ENCODE measurements at regions of chr9 and their contacts with region 1.

Region 1: GRCh38 chr9:22452415-22453010 is 5.9 kb downstream of the DMRTA1 start:
- DNase-seq: peak in 7 of 10 donors; percentile 33 to 81 (median 45)

Region 2: GRCh38 chr9:22244141-22245011 is 208.1 kb before region 1 on chr9:
- intact Hi-C with region 1: loop called (anchors 2 kb)
- DNase-seq: no peak

Region 3: GRCh38 chr9:22307013-22307711 is 145.4 kb before region 1 on chr9:
- intact Hi-C with region 1: loop called (anchors 5 kb)
- DNase-seq: peak in 1 of 10 donors; percentile 8

Region 4: DNA sequence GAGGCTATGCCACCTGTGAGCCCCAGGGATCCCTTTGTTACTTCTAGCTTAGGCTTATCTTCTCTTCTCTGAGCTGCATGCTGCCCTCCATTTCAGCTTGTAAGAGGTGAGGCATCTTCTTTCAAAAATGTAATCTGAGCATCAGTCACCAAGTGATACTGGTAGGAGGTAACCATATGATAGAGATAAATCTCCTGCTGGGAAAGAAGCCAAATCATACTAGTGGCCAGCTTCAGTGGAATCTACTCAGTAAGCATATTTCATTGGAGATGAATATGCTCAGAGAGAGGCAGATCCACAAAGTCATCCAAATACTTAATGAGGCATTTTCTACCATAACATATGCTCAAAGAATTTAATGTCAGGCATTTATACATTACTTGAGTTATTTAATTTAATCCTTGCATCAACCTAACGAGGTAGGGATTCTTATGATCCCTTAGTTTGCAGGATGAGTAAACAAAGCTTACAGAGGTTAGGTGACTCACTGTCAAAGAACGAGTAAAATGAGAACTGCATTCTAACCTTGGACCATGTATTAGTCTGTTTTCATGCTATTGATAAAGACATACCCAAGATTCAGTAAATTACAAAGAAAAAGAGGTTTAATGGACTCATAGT is 56.8 kb before region 1 on chr9:
- intact Hi-C with region 1: no loop called
- DNase-seq: no peak